Calu3 (cell line): ENCODE measurements at regions of chr12 and their contacts with region 1.

Region 1: GRCh38 chr12:3777206-3777809 is 24.4 kb upstream of the CRACR2A start:
- DNase-seq: peak; percentile 37
- H3K4me3 Mint-ChIP-seq: no peak overlapping the region
- H3K27ac Mint-ChIP-seq: no peak overlapping the region
- H3K4me1 Mint-ChIP-seq: no peaks in the 10 kb centered on the region
- H3K27me3 Mint-ChIP-seq: no peaks in the 10 kb centered on the region
- CTCF ChIP-seq: peak; percentile 31

Region 2: DNA sequence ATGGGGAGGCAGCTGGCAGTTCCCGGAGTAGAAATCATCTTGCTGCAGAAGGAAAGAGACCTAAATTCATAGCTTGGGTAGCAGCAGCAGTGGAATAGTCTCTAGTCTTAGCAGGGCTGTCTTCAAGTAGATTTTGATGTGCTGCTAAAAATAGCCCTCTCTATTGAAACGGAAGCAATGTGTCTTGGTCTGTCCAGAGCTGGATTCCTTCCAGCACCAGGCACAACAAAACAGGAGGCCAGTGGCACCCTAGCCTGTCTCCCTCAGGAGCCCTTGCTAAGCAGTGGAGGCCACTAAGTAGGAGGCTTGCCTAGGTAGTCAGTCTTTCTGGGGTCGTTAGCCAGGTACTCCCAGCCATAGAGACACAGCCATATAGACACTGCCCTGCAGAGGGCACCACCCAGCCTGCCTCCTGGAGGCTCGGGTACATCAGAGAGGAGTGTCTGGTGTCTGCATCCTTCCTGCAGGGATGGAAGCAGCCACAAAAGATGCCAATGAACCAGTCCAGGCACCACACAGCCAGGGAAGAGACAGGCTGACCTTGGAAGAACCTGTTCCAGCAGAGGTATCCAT is 121.9 kb before region 1 on chr12:
- CTCF ChIA-PET with region 1: interaction called, 6 read pairs
- intact Hi-C with region 1: loop called (anchors 1 kb)
- DNase-seq: peak; percentile 26
- H3K4me3 Mint-ChIP-seq: no peak overlapping the region
- H3K27ac Mint-ChIP-seq: no peak overlapping the region
- H3K4me1 Mint-ChIP-seq: peaks cover 8% of the 10 kb centered on the region
- H3K27me3 Mint-ChIP-seq: no peaks in the 10 kb centered on the region
- CTCF ChIP-seq: peak; percentile 47

Region 3: GRCh38 chr12:3712209-3712992 is 64.9 kb before region 1 on chr12:
- CTCF ChIA-PET with region 1: no interaction called
- intact Hi-C with region 1: no loop called
- DNase-seq: no peak
- H3K4me3 Mint-ChIP-seq: no peak overlapping the region
- H3K27ac Mint-ChIP-seq: no peak overlapping the region
- H3K4me1 Mint-ChIP-seq: no peaks in the 10 kb centered on the region
- H3K27me3 Mint-ChIP-seq: no peaks in the 10 kb centered on the region
- CTCF ChIP-seq: no peak